ENCODE measurements at regions of chr4 and their contacts with region 1.

Region 1: GRCh38 chr4:17614416-17615299 is at the start of gene MED28:
- DNase-seq: peak; percentile 97
- ATAC-seq: peak; percentile 85
- H3K4me3 Mint-ChIP-seq: peak within 1 kb of the TSS; percentile 99
- H3K27ac Mint-ChIP-seq: peak within 1 kb of the TSS; percentile 97
- H3K4me1 Mint-ChIP-seq: peaks cover 51% of the 10 kb centered on the region
- H3K27me3 Mint-ChIP-seq: no peaks in the 10 kb centered on the region
- total RNA-seq, gene MED28: 55.2 to 58.4 TPM

Region 2: DNA sequence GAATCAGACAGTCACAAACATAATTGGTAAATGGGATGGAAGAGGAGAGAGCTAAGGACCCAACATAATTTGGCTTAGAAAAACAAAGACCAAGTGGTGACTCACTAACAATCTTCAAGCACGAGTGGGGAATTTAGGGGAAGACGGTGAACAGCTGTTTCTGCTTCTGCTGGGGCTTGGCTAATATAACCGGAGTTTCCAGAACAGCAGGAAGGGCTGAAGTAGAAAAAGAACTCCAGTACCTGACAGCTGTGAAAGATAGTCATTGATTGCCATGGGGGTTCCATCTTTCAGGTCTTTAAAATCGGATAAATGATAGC is 425.3 kb before region 1 on chr4:
- CTCF ChIA-PET with region 1: no interaction called
- POLR2A ChIA-PET with region 1: no interaction called
- DNase-seq: no peak
- ATAC-seq: no peak
- H3K4me3 Mint-ChIP-seq: no peak overlapping the region
- H3K27ac Mint-ChIP-seq: no peak overlapping the region
- H3K4me1 Mint-ChIP-seq: no peaks in the 10 kb centered on the region
- H3K27me3 Mint-ChIP-seq: no peaks in the 10 kb centered on the region

Region 3: GRCh38 chr4:17529452-17529964 is 85.2 kb before region 1 on chr4:
- CTCF ChIA-PET with region 1: no interaction called
- POLR2A ChIA-PET with region 1: no interaction called
- DNase-seq: no peak
- ATAC-seq: no peak
- H3K4me3 Mint-ChIP-seq: no peak overlapping the region
- H3K27ac Mint-ChIP-seq: no peak overlapping the region
- H3K4me1 Mint-ChIP-seq: no peaks in the 10 kb centered on the region
- H3K27me3 Mint-ChIP-seq: peaks cover 16% of the 10 kb centered on the region

Region 4: GRCh38 chr4:17544205-17544604 is 70.5 kb before region 1 on chr4:
- CTCF ChIA-PET with region 1: interaction called, 21 read pairs
- POLR2A ChIA-PET with region 1: interaction called, 7 read pairs
- DNase-seq: no peak
- ATAC-seq: no peak
- H3K4me3 Mint-ChIP-seq: no peak overlapping the region
- H3K27ac Mint-ChIP-seq: no peak overlapping the region
- H3K4me1 Mint-ChIP-seq: peaks cover 6% of the 10 kb centered on the region
- H3K27me3 Mint-ChIP-seq: peaks cover 23% of the 10 kb centered on the region

Region 5: DNA sequence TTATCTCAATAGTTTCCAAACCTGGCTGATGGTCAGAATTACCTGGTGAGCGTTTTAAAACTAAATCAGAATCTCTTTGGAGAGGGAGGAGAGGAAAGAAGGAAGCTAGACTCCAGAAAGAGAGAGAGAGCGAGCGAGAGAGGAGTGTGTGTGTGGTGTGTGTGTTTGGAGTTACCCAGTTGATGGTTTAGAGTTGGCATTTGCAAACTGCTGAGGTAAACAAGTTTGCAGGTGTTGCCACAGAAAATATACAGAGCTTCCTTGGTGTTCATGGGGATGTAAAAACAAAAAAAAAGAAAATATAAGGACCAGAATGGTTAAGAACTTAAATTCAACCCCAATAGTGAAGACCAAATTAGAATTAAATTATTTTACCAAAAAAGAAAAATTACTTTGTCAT is 64.1 kb before region 1 on chr4:
- CTCF ChIA-PET with region 1: interaction called, 21 read pairs
- POLR2A ChIA-PET with region 1: interaction called, 7 read pairs
- DNase-seq: no peak
- ATAC-seq: no peak
- H3K4me3 Mint-ChIP-seq: no peak overlapping the region
- H3K27ac Mint-ChIP-seq: no peak overlapping the region
- H3K4me1 Mint-ChIP-seq: peaks cover 14% of the 10 kb centered on the region
- H3K27me3 Mint-ChIP-seq: peaks cover 19% of the 10 kb centered on the region

Region 6: DNA sequence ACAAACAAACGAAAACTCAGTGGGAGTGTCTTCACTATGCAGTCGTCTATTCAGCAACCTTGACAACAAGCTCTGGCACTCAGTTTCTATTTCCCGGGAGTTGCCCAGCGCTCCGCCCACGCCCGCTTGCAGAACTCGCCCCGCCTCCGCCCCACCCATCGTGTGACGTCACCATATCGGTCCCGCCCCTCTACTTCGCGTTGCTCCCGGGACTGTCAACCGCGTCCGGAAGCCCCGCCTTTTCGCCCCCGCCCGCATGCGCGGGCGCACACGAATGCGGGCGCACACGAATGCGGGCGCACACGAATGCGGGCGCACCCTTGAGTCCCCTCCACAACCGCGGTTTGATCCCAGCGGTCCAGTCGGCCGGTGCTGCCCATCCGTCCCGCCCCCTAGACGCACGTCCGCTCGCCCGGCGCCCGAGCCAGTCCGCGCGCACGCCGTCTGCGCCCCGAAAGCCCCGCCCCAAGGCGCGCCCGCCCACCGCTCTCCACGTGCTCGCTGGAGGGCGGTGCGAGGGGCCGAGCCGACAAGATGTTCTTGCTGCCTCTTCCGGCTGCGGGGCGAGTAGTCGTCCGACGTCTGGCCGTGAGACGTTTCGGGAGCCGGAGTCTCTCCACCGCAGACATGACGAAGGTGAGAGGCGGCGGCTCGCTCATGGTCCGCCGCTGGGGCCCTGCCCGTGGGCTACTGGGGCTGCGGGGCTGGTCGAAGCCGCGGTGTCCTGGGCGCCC is 37.6 kb before region 1 on chr4 and contains the start of gene LAP3:
- CTCF ChIA-PET with region 1: interaction called, 7 read pairs
- POLR2A ChIA-PET with region 1: interaction called, 79 read pairs
- DNase-seq: peak; percentile 99
- ATAC-seq: peak; percentile 88
- H3K4me3 Mint-ChIP-seq: peak within 1 kb of the TSS; percentile 95
- H3K27ac Mint-ChIP-seq: peak within 1 kb of the TSS; percentile 99
- H3K4me1 Mint-ChIP-seq: peaks cover 43% of the 10 kb centered on the region
- H3K27me3 Mint-ChIP-seq: no peaks in the 10 kb centered on the region
- total RNA-seq, gene LAP3: 147 to 154 TPM

Region 7: GRCh38 chr4:17636696-17637622 is 22.3 kb after region 1 on chr4:
- CTCF ChIA-PET with region 1: interaction called, 10 read pairs
- POLR2A ChIA-PET with region 1: interaction called, 6 read pairs
- DNase-seq: peak; percentile 81
- ATAC-seq: peak; percentile 90
- H3K4me3 Mint-ChIP-seq: no peak overlapping the region
- H3K27ac Mint-ChIP-seq: no peak overlapping the region
- H3K4me1 Mint-ChIP-seq: no peaks in the 10 kb centered on the region
- H3K27me3 Mint-ChIP-seq: no peaks in the 10 kb centered on the region

Region 8: DNA sequence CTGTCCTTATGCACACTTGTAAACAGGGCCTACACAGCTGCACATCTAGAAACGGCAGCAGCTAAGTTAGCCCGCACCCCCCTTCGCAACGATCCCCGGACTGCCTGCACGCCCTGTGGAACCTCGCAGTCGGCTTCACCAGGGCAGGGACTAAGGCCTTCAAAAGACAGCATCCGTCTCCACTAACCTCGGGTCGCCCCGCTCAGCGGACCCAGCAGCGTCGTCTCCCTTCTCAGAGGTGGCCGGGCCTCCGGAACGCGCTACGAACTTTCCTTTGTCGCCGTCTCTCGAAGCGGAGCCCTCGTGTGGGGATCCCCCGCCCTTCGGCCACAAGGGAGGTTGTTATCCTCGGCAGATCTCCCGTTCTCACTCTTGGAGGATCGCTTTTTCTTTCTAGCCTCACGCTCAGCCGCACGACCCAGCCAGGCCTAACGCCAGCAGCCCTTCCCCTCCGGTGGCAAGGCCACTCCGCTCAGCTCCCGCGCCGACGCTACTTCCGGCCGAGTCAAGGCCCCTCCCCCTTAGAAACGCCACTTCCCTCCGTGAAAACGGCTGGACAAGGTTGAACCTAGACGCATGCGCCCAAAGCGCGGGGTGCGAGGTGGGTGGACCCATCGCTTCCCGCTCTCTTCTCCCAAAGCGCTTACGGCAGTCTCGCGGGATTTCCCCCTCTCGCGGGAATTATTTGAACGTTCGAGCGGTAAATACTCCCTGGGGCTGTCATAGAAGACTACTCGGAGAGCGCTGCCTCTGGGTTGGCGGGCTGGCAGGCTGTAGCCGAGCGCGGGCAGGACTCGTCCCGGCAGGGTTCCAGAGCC is 195.8 kb after region 1 on chr4 and contains the starts of genes DCAF16 and NCAPG:
- CTCF ChIA-PET with region 1: interaction called, 3 read pairs
- POLR2A ChIA-PET with region 1: interaction called, 23 read pairs
- DNase-seq: peak; percentile 99
- ATAC-seq: peak; percentile 90
- H3K4me3 Mint-ChIP-seq: peak within 1 kb of the TSS; percentile 92
- H3K27ac Mint-ChIP-seq: peak within 1 kb of the TSS; percentile 100
- H3K4me1 Mint-ChIP-seq: peaks cover 51% of the 10 kb centered on the region
- H3K27me3 Mint-ChIP-seq: no peaks in the 10 kb centered on the region
- total RNA-seq, gene DCAF16: 35.8 to 39.2 TPM
- total RNA-seq, gene NCAPG: 92.5 to 93.5 TPM